Naive thymus-derived CD4-positive, alpha-beta T cell (primary cell): ENCODE measurements at regions of chr6 and their contacts with region 1.

Region 1: GRCh38 chr6:138987640-138988468 is at the start of gene REPS1:
- DNase-seq: peak; percentile 83 to 97 (median 89)
- ATAC-seq: peak; percentile 95
- H3K4me3 ChIP-seq: peak within 1 kb of the TSS; percentile 61
- H3K4me3 Mint-ChIP-seq: peak within 1 kb of the TSS in 7 of 10 donors; percentile 86 to 94 (median 92)
- H3K27ac ChIP-seq: peak within 1 kb of the TSS; percentile 89
- H3K27ac Mint-ChIP-seq: peak within 1 kb of the TSS; percentile 84 to 96 (median 91)
- H3K4me1 ChIP-seq: peaks cover 32 to 40% of the 10 kb centered on the region in 2 donors
- H3K4me1 Mint-ChIP-seq: peaks cover 7 to 24% (median 13%) of the 10 kb centered on the region in 7 donors
- H3K27me3 ChIP-seq: no peaks in the 10 kb centered on the region
- H3K27me3 Mint-ChIP-seq: peaks cover 0 to 2% (median 0%) of the 10 kb centered on the region in 5 donors
- total RNA-seq, gene REPS1: 55.9 to 74.6 (median 69.7) TPM

Region 2: DNA sequence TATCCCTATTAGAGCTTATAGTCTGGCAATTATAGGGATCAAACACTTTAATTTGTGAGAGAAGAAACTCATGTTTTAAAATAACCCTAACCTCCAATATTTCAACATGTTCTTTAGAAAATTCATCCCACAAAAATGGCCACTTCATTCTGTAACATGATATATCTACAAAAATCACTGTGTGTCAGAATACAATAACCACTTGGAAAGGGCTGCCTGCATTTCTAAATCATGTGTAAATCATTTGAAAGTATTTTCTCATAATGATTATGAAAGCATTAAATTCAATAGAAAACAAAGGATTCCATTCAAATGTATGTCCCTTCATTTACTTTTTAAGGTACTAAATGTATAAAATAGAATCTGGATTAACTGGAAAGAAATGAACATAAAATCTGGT is 387.1 kb before region 1 on chr6:
- CTCF ChIA-PET with region 1: no interaction called
- POLR2A ChIA-PET with region 1: no interaction called
- intact Hi-C with region 1: no loop called
- DNase-seq: no peak
- ATAC-seq: no peak
- H3K4me3 ChIP-seq: no peak overlapping the region
- H3K4me3 Mint-ChIP-seq: no peak overlapping the region
- H3K27ac ChIP-seq: no peak overlapping the region
- H3K27ac Mint-ChIP-seq: no peak overlapping the region
- H3K4me1 ChIP-seq: no peaks in the 10 kb centered on the region
- H3K4me1 Mint-ChIP-seq: no peaks in the 10 kb centered on the region
- H3K27me3 ChIP-seq: no peaks in the 10 kb centered on the region
- H3K27me3 Mint-ChIP-seq: peaks cover 10 to 38% (median 24%) of the 10 kb centered on the region in 5 donors

Region 3: GRCh38 chr6:138773177-138774091 is 214.4 kb before region 1 on chr6 and contains the start of gene CCDC28A:
- CTCF ChIA-PET with region 1: no interaction called
- POLR2A ChIA-PET with region 1: no interaction called
- intact Hi-C with region 1: loop called (anchors 1 kb)
- DNase-seq: peak; percentile 86 to 98 (median 97)
- ATAC-seq: peak; percentile 93
- H3K4me3 ChIP-seq: peak within 1 kb of the TSS; percentile 94
- H3K4me3 Mint-ChIP-seq: peak within 1 kb of the TSS; percentile 91 to 100 (median 99)
- H3K27ac ChIP-seq: peak within 1 kb of the TSS; percentile 87
- H3K27ac Mint-ChIP-seq: peak within 1 kb of the TSS; percentile 96 to 100 (median 100)
- H3K4me1 ChIP-seq: peaks cover 6 to 10% of the 10 kb centered on the region in 2 donors
- H3K4me1 Mint-ChIP-seq: peaks cover 4 to 39% (median 36%) of the 10 kb centered on the region in 7 donors
- H3K27me3 ChIP-seq: no peaks in the 10 kb centered on the region
- H3K27me3 Mint-ChIP-seq: no peaks in the 10 kb centered on the region
- total RNA-seq, gene CCDC28A: 19.9 to 34.2 (median 25.6) TPM

Region 4: DNA sequence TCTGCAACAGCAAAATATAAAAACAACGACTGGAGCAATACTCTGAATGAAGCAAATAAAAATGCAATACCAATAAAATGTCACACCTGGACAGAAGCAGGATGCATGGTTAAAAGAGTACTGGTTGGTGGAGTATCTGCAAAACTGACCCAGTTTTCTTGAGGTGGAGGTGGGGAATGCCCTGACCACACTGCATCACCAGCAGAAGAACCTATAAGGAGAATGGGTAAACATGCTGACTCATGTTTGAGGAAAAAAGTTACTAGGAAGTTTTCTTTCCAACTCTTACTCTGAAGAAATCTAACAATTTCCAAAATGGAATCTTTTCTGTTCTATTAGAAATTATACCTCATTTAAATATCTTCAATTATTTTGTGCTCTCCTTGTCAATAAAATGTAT is 43.4 kb before region 1 on chr6:
- CTCF ChIA-PET with region 1: no interaction called
- POLR2A ChIA-PET with region 1: no interaction called
- intact Hi-C with region 1: loop called (anchors 1 to 5 kb)
- DNase-seq: peak in 1 of 9 donors; percentile 35
- ATAC-seq: peak; percentile 64
- H3K4me3 ChIP-seq: no peak overlapping the region
- H3K4me3 Mint-ChIP-seq: no peak overlapping the region
- H3K27ac ChIP-seq: no peak overlapping the region
- H3K27ac Mint-ChIP-seq: no peak overlapping the region
- H3K4me1 ChIP-seq: peaks cover 9 to 10% of the 10 kb centered on the region in 2 donors
- H3K4me1 Mint-ChIP-seq: peaks cover 23 to 46% (median 32%) of the 10 kb centered on the region in 7 donors
- H3K27me3 ChIP-seq: no peaks in the 10 kb centered on the region
- H3K27me3 Mint-ChIP-seq: no peaks in the 10 kb centered on the region

Region 5: DNA sequence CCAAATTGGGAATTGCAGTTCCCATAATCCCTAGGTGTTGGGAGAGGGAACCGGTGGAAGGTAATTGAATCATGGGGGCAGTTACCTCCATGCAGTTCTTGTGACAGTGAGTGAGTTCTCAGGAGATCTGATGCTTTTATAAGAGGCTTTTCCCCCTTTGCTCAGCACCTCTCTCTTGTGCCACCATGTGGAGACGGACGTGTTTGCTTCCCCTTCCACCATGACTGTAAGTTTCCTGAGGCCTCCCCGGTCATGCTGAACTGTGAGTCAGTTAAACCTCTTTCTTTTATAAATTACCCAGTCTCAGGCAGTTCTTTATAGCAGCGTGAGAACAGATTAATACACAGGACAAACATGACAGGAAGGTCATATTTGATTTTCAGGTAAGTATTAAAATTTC is 121.7 kb after region 1 on chr6:
- CTCF ChIA-PET with region 1: no interaction called
- POLR2A ChIA-PET with region 1: interaction called, 5 read pairs
- intact Hi-C with region 1: loop called in 1 of 2 experiments (anchors 5 kb)
- DNase-seq: peak in 2 of 9 donors; percentile 21 to 28
- ATAC-seq: no peak
- H3K4me3 ChIP-seq: no peak overlapping the region
- H3K4me3 Mint-ChIP-seq: peak overlapping the region in 2 of 10 donors; percentile 6 to 36
- H3K27ac ChIP-seq: no peak overlapping the region
- H3K27ac Mint-ChIP-seq: peak overlapping the region in 8 of 9 donors; percentile 38 to 94 (median 86)
- H3K4me1 ChIP-seq: peaks cover 36 to 48% of the 10 kb centered on the region in 2 donors
- H3K4me1 Mint-ChIP-seq: peaks cover 17 to 74% (median 59%) of the 10 kb centered on the region in 7 donors
- H3K27me3 ChIP-seq: no peaks in the 10 kb centered on the region
- H3K27me3 Mint-ChIP-seq: no peaks in the 10 kb centered on the region

Region 6: DNA sequence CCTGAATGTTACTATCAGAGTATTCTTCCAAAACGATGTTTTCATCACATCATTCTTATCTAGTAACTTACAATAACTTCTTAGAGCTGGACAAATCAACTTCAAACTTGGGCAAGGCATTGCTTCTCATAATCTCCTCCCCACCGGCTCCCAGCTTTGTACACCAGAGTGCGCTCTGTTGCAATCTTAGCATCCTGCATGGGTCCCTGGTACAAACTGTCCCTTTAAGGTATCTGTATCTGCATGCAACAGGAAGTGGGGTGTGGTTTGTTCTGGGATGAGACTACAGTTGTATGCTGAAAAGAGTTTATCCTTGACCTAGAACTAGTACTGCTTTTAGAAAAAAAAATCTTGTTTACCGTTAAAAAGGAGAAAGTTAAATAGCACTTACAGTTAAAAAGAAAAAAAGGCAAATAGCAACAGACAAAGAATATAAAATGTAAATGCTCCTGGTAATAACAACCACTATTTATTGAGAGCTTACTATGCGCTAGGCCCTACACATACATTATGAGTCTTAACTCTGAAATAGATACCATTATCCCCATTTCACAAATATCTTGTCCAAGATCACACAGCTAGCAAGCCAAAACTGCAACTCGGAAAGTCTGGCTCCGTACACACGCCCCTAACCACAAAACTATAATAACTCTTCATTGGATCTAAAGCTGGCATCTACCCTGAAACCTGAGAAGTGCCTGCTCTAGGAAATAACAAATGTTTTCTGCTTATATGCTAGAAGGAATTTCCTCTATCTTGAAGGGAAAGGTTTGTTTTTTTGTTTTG is 137.2 kb after region 1 on chr6:
- CTCF ChIA-PET with region 1: no interaction called
- POLR2A ChIA-PET with region 1: interaction called, 8 read pairs
- intact Hi-C with region 1: loop called (anchors 1 to 5 kb)
- DNase-seq: peak in 8 of 9 donors; percentile 65 to 90 (median 84)
- ATAC-seq: peak; percentile 99
- H3K4me3 ChIP-seq: peak overlapping the region; percentile 31
- H3K4me3 Mint-ChIP-seq: peak overlapping the region; percentile 25 to 86 (median 68)
- H3K27ac ChIP-seq: peak overlapping the region; percentile 60
- H3K27ac Mint-ChIP-seq: peak overlapping the region; percentile 86 to 97 (median 94)
- H3K4me1 ChIP-seq: peaks cover 28 to 38% of the 10 kb centered on the region in 2 donors
- H3K4me1 Mint-ChIP-seq: peaks cover 19 to 65% (median 60%) of the 10 kb centered on the region in 7 donors
- H3K27me3 ChIP-seq: no peaks in the 10 kb centered on the region
- H3K27me3 Mint-ChIP-seq: no peaks in the 10 kb centered on the region

Region 7: DNA sequence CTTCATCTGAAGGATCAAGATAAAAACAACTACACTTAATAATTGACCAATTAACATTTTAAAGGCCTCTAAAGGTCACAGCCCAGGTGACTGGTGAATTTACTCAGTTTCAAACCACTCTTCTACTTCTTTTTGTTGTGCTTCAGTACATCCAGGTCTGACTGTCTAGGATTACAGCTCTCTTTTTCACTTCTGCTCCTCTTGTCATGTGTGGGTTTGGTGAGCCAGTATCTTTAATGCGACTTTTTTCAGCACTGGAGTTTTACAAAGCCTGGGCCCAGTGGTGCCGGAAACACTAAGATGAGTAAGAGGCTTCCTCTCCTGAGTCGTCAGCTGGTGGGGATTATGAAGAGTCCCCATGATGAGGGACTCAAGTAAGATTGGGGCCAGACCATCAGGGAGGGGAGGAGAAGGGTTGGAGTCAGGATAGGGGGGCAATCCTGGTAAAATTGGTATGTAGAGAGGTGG is 174.0 kb after region 1 on chr6:
- CTCF ChIA-PET with region 1: no interaction called
- POLR2A ChIA-PET with region 1: interaction called, 11 read pairs
- intact Hi-C with region 1: loop called in 1 of 2 experiments (anchors 2 kb)
- DNase-seq: peak in 8 of 9 donors; percentile 59 to 78 (median 73)
- ATAC-seq: peak; percentile 64
- H3K4me3 ChIP-seq: peak overlapping the region; percentile 11
- H3K4me3 Mint-ChIP-seq: peak overlapping the region; percentile 79 to 88 (median 83)
- H3K27ac ChIP-seq: peak overlapping the region; percentile 75
- H3K27ac Mint-ChIP-seq: peak overlapping the region; percentile 86 to 98 (median 91)
- H3K4me1 ChIP-seq: peaks cover 81 to 85% of the 10 kb centered on the region in 2 donors
- H3K4me1 Mint-ChIP-seq: peaks cover 70 to 96% (median 86%) of the 10 kb centered on the region in 7 donors
- H3K27me3 ChIP-seq: no peaks in the 10 kb centered on the region
- H3K27me3 Mint-ChIP-seq: no peaks in the 10 kb centered on the region

Region 8: GRCh38 chr6:139219271-139219729 is 231.4 kb after region 1 on chr6:
- CTCF ChIA-PET with region 1: interaction called, 6 read pairs
- POLR2A ChIA-PET with region 1: no interaction called
- intact Hi-C with region 1: loop called in 1 of 2 experiments (anchors 1 kb)
- DNase-seq: peak; percentile 39 to 76 (median 60)
- ATAC-seq: peak; percentile 100
- H3K4me3 ChIP-seq: no peak overlapping the region
- H3K4me3 Mint-ChIP-seq: peak overlapping the region in 8 of 10 donors; percentile 41 to 68 (median 58)
- H3K27ac ChIP-seq: no peak overlapping the region
- H3K27ac Mint-ChIP-seq: peak overlapping the region; percentile 49 to 92 (median 78)
- H3K4me1 ChIP-seq: peaks cover 5 to 10% of the 10 kb centered on the region in 2 donors
- H3K4me1 Mint-ChIP-seq: peaks cover 6 to 20% (median 12%) of the 10 kb centered on the region in 7 donors
- H3K27me3 ChIP-seq: no peaks in the 10 kb centered on the region
- H3K27me3 Mint-ChIP-seq: no peaks in the 10 kb centered on the region